ENCODE measurements at regions of chr11 and their contacts with region 1.

Region 1: DNA sequence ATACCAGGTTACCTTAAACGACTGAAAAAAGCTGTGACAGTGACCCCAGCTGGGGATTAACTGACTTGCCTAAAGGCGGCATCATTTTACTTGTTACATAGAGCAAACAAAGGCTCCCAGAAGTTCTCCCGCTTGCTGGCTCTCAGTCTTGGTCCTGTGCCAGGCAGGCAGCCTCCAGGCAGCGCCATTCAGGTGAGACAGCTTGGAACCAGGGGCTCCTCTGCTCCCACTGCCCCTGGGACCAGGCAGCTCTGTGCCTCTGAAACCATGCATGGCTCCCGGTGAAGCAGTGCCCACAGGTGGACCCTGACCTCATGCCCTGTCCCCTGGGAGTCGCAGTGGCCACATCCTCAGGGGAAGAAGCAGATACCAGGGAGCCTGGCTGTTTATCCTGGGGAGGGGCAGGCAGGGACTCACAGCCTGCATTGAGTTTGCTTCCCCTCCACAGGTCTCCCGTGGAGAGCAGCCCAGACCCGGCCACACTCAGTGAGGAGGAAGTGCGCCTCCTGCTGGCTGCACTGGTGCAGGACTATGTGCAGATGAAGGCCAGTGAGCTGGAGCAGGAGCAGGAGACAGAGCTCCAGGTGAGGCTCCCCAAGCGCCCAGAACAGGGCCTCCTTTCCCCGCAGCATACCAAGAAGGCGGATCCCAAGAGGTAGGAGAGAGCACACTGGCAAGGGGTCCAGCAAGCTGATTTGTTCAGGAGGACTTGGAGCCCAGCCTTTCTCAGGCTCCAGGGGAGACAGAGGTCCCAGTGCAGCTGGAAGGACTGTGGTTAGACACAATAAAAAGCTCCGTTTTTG is 15.6 kb upstream of the CYP2R1 start:
- DNase-seq: peak; percentile 64 to 95 (median 86)
- ATAC-seq: peak; percentile 53 to 76 (median 69)
- H3K4me3 ChIP-seq: no peak overlapping the region
- H3K27ac ChIP-seq: no peak overlapping the region
- H3K4me1 ChIP-seq: peaks cover 0 to 7% (median 0%) of the 10 kb centered on the region in 3 donors
- H3K27me3 ChIP-seq: no peaks in the 10 kb centered on the region
- CTCF ChIP-seq: peak; percentile 67 to 78 (median 73)

Region 2: GRCh38 chr11:14537134-14537599 is 370.4 kb before region 1 on chr11:
- intact Hi-C with region 1: loop called in 1 of 3 experiments (anchors 10 kb)
- DNase-seq: peak in 1 of 6 donors; percentile 26
- ATAC-seq: peak in 3 of 4 donors; percentile 66 to 74 (median 67)
- H3K4me3 ChIP-seq: no peak overlapping the region
- H3K27ac ChIP-seq: no peak overlapping the region
- H3K4me1 ChIP-seq: peaks cover 15 to 29% (median 21%) of the 10 kb centered on the region in 3 donors
- H3K27me3 ChIP-seq: no peaks in the 10 kb centered on the region
- CTCF ChIP-seq: peak; percentile 60 to 70 (median 63)

Region 3: DNA sequence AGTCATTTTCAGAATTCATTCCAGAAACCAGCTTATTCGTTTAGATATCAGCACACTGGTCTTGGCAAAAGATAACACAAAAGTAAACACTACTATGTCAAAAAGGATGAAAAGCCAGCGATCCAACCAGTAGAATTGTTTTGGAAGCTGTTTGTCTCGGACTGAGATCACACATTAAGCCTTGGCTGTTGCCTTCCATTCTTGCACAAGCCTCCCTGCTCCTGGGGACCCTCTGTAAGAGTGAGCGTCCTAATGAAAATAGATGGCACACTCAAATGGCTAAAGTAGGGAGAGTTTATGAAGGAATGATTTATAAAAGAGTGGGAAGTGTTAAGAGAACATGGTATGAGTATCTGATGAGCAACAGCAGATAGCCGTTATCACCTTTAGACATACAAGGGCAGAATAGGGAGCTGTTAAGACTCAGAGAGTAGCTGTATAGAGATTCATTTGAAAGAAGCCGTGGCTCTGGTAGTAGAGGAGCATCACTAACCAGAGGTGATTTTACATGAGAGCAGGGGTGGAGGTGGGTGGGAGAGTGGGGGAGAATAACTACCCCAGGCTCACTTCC is 238.8 kb before region 1 on chr11:
- intact Hi-C with region 1: no loop called
- DNase-seq: no peak
- ATAC-seq: peak in 2 of 4 donors; percentile 41 to 54
- H3K4me3 ChIP-seq: no peak overlapping the region
- H3K27ac ChIP-seq: no peak overlapping the region
- H3K4me1 ChIP-seq: peaks cover 0 to 5% (median 0%) of the 10 kb centered on the region in 3 donors
- H3K27me3 ChIP-seq: no peaks in the 10 kb centered on the region
- CTCF ChIP-seq: no peak

Region 4: GRCh38 chr11:14773755-14774154 is 133.9 kb before region 1 on chr11:
- intact Hi-C with region 1: no loop called
- DNase-seq: no peak
- ATAC-seq: no peak
- H3K4me3 ChIP-seq: no peak overlapping the region
- H3K27ac ChIP-seq: no peak overlapping the region
- H3K4me1 ChIP-seq: peaks cover 0 to 6% (median 2%) of the 10 kb centered on the region in 3 donors
- H3K27me3 ChIP-seq: no peaks in the 10 kb centered on the region
- CTCF ChIP-seq: no peak

Region 5: GRCh38 chr11:14789879-14790484 is 117.6 kb before region 1 on chr11:
- intact Hi-C with region 1: loop called in 1 of 3 experiments (anchors 10 kb)
- DNase-seq: no peak
- ATAC-seq: peak in 2 of 4 donors; percentile 38 to 51
- H3K4me3 ChIP-seq: no peak overlapping the region
- H3K27ac ChIP-seq: no peak overlapping the region
- H3K4me1 ChIP-seq: peaks cover 0 to 7% (median 0%) of the 10 kb centered on the region in 3 donors
- H3K27me3 ChIP-seq: no peaks in the 10 kb centered on the region
- CTCF ChIP-seq: peak in 1 of 4 donors; percentile 27

Region 6: GRCh38 chr11:14842002-14842401 is 65.6 kb before region 1 on chr11:
- intact Hi-C with region 1: no loop called
- DNase-seq: no peak
- ATAC-seq: no peak
- H3K4me3 ChIP-seq: no peak overlapping the region
- H3K27ac ChIP-seq: no peak overlapping the region
- H3K4me1 ChIP-seq: no peaks in the 10 kb centered on the region
- H3K27me3 ChIP-seq: no peaks in the 10 kb centered on the region
- CTCF ChIP-seq: no peak

Region 7: GRCh38 chr11:15074206-15075161 is 166.9 kb after region 1 on chr11:
- intact Hi-C with region 1: loop called in 1 of 3 experiments (anchors 5 kb)
- DNase-seq: peak; percentile 85 to 99 (median 94)
- ATAC-seq: peak; percentile 90 to 95 (median 92)
- H3K4me3 ChIP-seq: peak overlapping the region; percentile 0 to 55 (median 34)
- H3K27ac ChIP-seq: peak overlapping the region in 3 of 4 donors; percentile 22 to 57 (median 41)
- H3K4me1 ChIP-seq: no peaks in the 10 kb centered on the region
- H3K27me3 ChIP-seq: no peaks in the 10 kb centered on the region
- CTCF ChIP-seq: peak; percentile 72 to 88 (median 83)

Measured in pancreas (tissue), 10 donors.